Endothelial cell of umbilical vein (primary cell): ENCODE measurements at regions of chrX and their contacts with region 1.

Region 1: DNA sequence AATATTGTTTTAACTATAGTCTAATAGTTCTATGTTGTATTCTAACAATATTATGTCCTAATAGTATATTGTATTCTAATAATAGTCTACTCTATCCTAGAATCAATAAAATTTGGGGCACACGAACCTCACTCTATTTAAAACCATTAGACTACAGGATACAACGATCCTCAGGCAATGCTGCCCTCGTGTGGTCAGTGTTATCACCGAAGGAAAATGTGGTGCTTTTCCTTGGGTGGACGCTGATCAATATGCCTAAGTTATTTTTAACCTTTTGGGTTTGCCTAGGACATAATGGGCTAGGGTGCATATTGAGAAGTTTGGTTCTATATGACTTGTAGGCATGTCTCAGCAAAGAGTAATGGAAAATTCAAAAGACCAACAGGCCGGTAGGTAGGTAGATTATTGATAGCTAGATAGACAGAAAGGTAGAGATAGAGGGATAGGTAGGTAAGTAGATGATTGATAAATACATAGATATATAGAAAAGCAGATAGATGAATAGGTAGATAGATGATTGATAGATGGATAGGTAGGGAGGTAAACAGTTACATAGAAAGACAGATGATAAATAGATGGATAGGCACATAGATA is 75.1 kb downstream of the PRKX start:
- DNase-seq: peak; percentile 32
- H3K4me3 ChIP-seq: no peak overlapping the region
- H3K27ac ChIP-seq: no peak overlapping the region
- H3K4me1 ChIP-seq: no peaks in the 10 kb centered on the region
- H3K27me3 ChIP-seq: no peaks in the 10 kb centered on the region
- CTCF ChIP-seq: peak; percentile 30 to 35
- POLR2A ChIP-seq: no peak

Region 2: GRCh38 chrX:2889045-2889605 is 749.3 kb before region 1 on chrX:
- CTCF ChIA-PET with region 1: no interaction called
- POLR2A ChIA-PET with region 1: no interaction called
- dilution Hi-C with region 1: no loop called
- intact Hi-C with region 1: loop called (anchors 10 kb)
- DNase-seq: no peak
- H3K4me3 ChIP-seq: peak overlapping the region; percentile 21 to 70 (median 32)
- H3K27ac ChIP-seq: no peak overlapping the region
- H3K4me1 ChIP-seq: peaks cover 3% of the 10 kb centered on the region
- H3K27me3 ChIP-seq: no peaks in the 10 kb centered on the region
- CTCF ChIP-seq: no peak
- POLR2A ChIP-seq: no peak

Region 3: DNA sequence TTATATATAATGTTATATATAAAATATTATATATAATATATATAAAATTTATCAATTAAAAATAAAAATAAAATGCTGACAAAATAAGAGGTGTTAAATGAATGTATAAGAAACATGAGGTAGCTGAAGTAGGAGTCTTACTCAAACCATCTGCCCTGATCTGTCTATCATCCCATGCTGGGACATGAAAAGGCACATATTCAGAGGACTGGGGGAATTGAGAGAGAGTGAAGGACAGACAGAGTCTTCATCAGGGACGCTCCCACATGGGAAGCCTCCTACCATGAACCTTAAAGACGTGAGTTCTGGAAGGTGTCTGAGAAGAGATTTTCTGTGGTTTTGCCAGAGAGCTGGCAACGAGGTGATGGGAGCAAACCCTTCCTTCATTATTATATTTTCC is 601.2 kb before region 1 on chrX:
- CTCF ChIA-PET with region 1: interaction called, 3 read pairs
- POLR2A ChIA-PET with region 1: no interaction called
- dilution Hi-C with region 1: no loop called
- intact Hi-C with region 1: loop called (anchors 1 kb)
- DNase-seq: no peak
- H3K4me3 ChIP-seq: no peak overlapping the region
- H3K27ac ChIP-seq: no peak overlapping the region
- H3K4me1 ChIP-seq: no peaks in the 10 kb centered on the region
- H3K27me3 ChIP-seq: no peaks in the 10 kb centered on the region
- CTCF ChIP-seq: no peak
- POLR2A ChIP-seq: no peak

Region 4: GRCh38 chrX:3119376-3119775 is 519.0 kb before region 1 on chrX:
- CTCF ChIA-PET with region 1: interaction called, 5 read pairs
- POLR2A ChIA-PET with region 1: no interaction called
- dilution Hi-C with region 1: no loop called
- intact Hi-C with region 1: loop called (anchors 2 kb)
- DNase-seq: no peak
- H3K4me3 ChIP-seq: no peak overlapping the region
- H3K27ac ChIP-seq: no peak overlapping the region
- H3K4me1 ChIP-seq: no peaks in the 10 kb centered on the region
- H3K27me3 ChIP-seq: no peaks in the 10 kb centered on the region
- CTCF ChIP-seq: no peak
- POLR2A ChIP-seq: no peak

Region 5: GRCh38 chrX:3659761-3660160 is 21.4 kb after region 1 on chrX:
- CTCF ChIA-PET with region 1: no interaction called
- POLR2A ChIA-PET with region 1: no interaction called
- dilution Hi-C with region 1: no loop called
- intact Hi-C with region 1: no loop called
- DNase-seq: no peak
- H3K4me3 ChIP-seq: no peak overlapping the region
- H3K27ac ChIP-seq: no peak overlapping the region
- H3K4me1 ChIP-seq: peaks cover under 1% of the 10 kb centered on the region
- H3K27me3 ChIP-seq: no peaks in the 10 kb centered on the region
- CTCF ChIP-seq: no peak
- POLR2A ChIP-seq: no peak